SK-N-SH (cell line): ENCODE measurements at regions of chr1 and their contacts with region 1.

Region 1: GRCh38 chr1:204301186-204301936 is 58.4 kb downstream of the PLEKHA6 start:
- DNase-seq: no peak
- H3K4me3 ChIP-seq: no peak overlapping the region
- H3K27ac ChIP-seq: peak overlapping the region in 1 of 2 experiments; percentile 100; a peak in 2 of 4 replicates
- H3K4me1 ChIP-seq: peaks cover 0 to 56% of the 10 kb centered on the region in 2 experiments; a peak in 2 of 4 replicates
- H3K27me3 ChIP-seq: peaks cover 20% of the 10 kb centered on the region
- CTCF ChIP-seq: no peak
- EP300 ChIP-seq: no peak
- RAD21 ChIP-seq: no peak

Region 2: DNA sequence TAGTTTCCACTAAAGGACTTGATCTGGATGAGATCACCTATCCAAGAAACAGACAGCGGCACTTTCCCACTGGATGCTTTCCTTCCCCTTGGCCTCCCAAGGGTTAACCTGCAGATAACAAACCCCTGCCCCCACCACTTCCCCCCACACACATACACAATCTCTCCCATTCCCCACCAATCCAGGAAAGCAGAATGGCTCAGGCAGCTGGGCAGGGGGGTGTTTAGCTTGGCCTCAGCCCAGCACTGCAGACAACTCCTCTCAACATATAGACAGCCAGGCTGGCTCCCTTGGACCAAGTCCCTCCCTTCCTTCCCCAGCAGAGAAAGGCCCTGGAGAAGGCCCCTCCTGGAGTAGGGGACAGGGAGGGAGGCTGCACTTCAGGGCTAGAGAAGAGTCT is 33.7 kb after region 1 on chr1:
- CTCF ChIA-PET with region 1: interaction called, 6 read pairs
- POLR2A ChIA-PET with region 1: interaction called, 11 read pairs
- DNase-seq: peak; percentile 76
- H3K4me3 ChIP-seq: no peak overlapping the region
- H3K27ac ChIP-seq: peak overlapping the region; percentile 32 to 99; a peak in 3 of 4 replicates
- H3K4me1 ChIP-seq: peaks cover 0 to 81% of the 10 kb centered on the region in 2 experiments; a peak in 2 of 4 replicates
- H3K27me3 ChIP-seq: no peaks in the 10 kb centered on the region; the same call in 1 of the 2 replicates
- CTCF ChIP-seq: no peak
- EP300 ChIP-seq: peak in 1 of 2 experiments; percentile 58; a peak in 2 of 4 replicates
- RAD21 ChIP-seq: peak; percentile 33